Activated T-helper 2 cell treated with anti-CD3 and anti-CD28 coated beads, Interferon-gamma antibody, Interleukin-2, Interleukin-4, amounts not matched to agents 10 μg/mL and 5 μg/mL and 100 μg/mL, durations not matched to agents 14 hours and 24 hours and 36 hours (primary cell): ENCODE measurements at regions of chr1 and their contacts with region 1.

Region 1: GRCh38 chr1:231590453-231591198 is 36.0 kb upstream of the DISC1 start:
- DNase-seq: peak; percentile 16
- H3K4me3 Mint-ChIP-seq: no peak overlapping the region
- H3K27ac Mint-ChIP-seq: no peak overlapping the region
- H3K4me1 Mint-ChIP-seq: peaks cover 7% of the 10 kb centered on the region
- H3K27me3 Mint-ChIP-seq: peaks cover 2% of the 10 kb centered on the region

Region 2: GRCh38 chr1:231357831-231358354 is 232.7 kb before region 1 on chr1:
- intact Hi-C with region 1: loop called (anchors 1 kb)
- DNase-seq: no peak
- H3K4me3 Mint-ChIP-seq: no peak overlapping the region
- H3K27ac Mint-ChIP-seq: no peak overlapping the region
- H3K4me1 Mint-ChIP-seq: peaks cover 8% of the 10 kb centered on the region
- H3K27me3 Mint-ChIP-seq: no peaks in the 10 kb centered on the region

Region 3: DNA sequence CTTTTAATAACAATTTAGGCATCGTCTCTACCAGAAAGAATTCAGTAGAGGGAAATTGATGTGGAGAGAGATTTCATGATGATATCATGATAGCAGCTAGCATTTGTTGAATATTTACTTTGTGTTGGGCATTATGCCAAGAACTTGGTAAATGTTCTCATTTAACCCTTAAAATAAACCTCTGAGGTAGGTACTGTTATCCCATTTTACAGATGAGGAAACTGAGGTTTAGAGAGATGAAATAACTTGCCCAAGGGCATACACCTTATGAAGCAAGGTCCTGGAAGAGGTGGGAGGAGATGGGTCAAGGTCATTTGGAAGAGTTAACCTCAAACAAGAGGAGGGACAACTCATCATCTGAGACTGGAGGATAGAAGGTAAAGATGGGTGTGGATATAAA is 27.4 kb before region 1 on chr1:
- intact Hi-C with region 1: no loop called
- DNase-seq: no peak
- H3K4me3 Mint-ChIP-seq: no peak overlapping the region
- H3K27ac Mint-ChIP-seq: no peak overlapping the region
- H3K4me1 Mint-ChIP-seq: peaks cover 2% of the 10 kb centered on the region
- H3K27me3 Mint-ChIP-seq: no peaks in the 10 kb centered on the region

Region 4: DNA sequence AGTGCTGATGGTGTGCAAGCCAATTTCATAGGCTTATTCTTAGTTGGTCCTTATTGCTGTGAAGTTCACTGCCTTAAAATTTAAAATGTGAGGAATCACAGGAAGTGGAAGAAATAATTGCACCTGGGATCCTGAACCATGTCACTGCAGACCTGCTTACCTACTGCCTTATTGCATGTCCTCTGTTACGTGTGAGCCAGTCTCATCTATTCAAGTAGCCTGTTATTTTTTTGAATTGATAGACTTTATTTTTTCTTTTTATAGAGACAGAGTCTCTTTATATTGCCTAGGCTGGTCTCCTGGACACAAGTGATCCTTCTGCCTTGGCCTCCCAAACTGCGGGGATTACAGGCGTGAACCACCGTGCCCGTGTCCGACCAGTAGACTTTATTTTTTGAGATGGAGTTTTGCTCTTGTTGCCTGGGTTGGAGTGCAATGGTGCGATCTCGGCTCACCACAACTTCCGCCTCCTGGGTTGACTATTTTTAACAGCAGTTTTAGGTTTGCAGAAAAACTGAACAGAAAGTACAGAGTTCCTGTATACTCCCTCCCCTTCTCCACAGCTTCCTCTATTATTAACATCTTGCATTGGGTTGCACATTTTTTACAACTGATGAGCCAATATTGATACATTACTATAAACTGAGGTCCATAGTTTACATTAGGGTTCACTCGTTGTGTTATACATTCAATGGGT is 21.9 kb after region 1 on chr1:
- intact Hi-C with region 1: no loop called
- DNase-seq: peak; percentile 53
- H3K4me3 Mint-ChIP-seq: peak overlapping the region; percentile 59
- H3K27ac Mint-ChIP-seq: peak overlapping the region; percentile 80
- H3K4me1 Mint-ChIP-seq: peaks cover 38% of the 10 kb centered on the region
- H3K27me3 Mint-ChIP-seq: peaks cover 16% of the 10 kb centered on the region

Region 5: GRCh38 chr1:231887866-231888265 is 297.2 kb after region 1 on chr1:
- intact Hi-C with region 1: no loop called
- DNase-seq: no peak
- H3K4me3 Mint-ChIP-seq: no peak overlapping the region
- H3K27ac Mint-ChIP-seq: no peak overlapping the region
- H3K4me1 Mint-ChIP-seq: no peaks in the 10 kb centered on the region
- H3K27me3 Mint-ChIP-seq: no peaks in the 10 kb centered on the region